ENCODE measurements at regions of chrX and their contacts with region 1.

Region 1: GRCh38 chrX:153032397-153033118 is 23.7 kb upstream of the PNMA3 start:
- DNase-seq: peak; percentile 82 to 92
- ATAC-seq: peak; percentile 78
- H3K4me3 ChIP-seq: no peak overlapping the region
- H3K27ac ChIP-seq: no peak overlapping the region
- H3K4me1 ChIP-seq: no peaks in the 10 kb centered on the region
- H3K27me3 ChIP-seq: peaks cover 0 to 3% of the 10 kb centered on the region in 2 donors

Region 2: GRCh38 chrX:153460845-153461244 is 428.3 kb after region 1 on chrX:
- intact Hi-C with region 1: loop called in 1 of 2 experiments (anchors 10 kb)
- DNase-seq: peak in 1 of 2 donors; percentile 65
- ATAC-seq: no peak
- H3K4me3 ChIP-seq: no peak overlapping the region
- H3K27ac ChIP-seq: no peak overlapping the region
- H3K4me1 ChIP-seq: no peaks in the 10 kb centered on the region
- H3K27me3 ChIP-seq: no peaks in the 10 kb centered on the region